Naive thymus-derived CD4-positive, alpha-beta T cell (primary cell): ENCODE measurements at regions of chr3 and their contacts with region 1.

Region 1: DNA sequence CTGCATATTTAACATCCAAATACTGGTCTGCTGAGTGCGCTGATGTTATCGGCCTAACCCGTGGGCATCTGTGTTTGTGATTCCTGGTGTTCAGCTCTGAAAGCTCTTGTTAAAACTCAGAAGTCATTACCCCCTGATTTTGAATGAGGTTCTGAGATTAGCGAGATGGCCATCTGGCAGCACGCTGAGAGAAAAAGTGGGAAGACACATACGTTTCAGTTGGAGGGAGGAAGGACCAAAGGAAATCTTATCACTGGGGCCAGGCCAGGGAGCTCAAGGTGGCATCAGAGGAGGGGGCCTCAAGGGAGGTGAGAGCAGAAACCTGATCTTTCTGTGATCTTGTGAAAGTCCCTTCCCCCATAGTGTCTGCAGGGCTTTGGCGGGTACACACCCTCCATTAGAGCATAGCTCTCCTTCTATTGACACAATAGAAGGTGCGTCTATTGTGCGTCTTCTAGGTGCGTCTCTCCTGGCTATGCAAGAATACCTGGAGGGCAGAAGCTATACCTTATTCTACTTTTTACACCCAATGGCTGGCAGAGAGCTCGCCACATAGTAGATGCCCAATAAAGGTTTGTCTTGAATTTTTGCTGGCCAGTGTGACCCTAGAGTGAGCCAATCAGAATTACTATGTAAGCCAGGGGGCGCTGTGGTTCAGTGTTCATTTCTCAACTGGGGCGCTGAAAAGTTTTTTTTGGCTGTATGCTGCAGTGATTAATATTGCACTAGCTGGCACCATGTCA is 182.4 kb downstream of the SHQ1 start:
- DNase-seq: peak; percentile 34 to 80 (median 59)
- ATAC-seq: peak; percentile 73
- H3K4me3 ChIP-seq: no peak overlapping the region
- H3K4me3 Mint-ChIP-seq: no peak overlapping the region
- H3K27ac ChIP-seq: no peak overlapping the region
- H3K27ac Mint-ChIP-seq: peak overlapping the region in 1 of 9 donors; percentile 59
- H3K4me1 ChIP-seq: peaks cover 0 to 4% of the 10 kb centered on the region in 2 donors
- H3K4me1 Mint-ChIP-seq: no peaks in the 10 kb centered on the region
- H3K27me3 ChIP-seq: no peaks in the 10 kb centered on the region
- H3K27me3 Mint-ChIP-seq: no peaks in the 10 kb centered on the region

Region 2: GRCh38 chr3:71926262-71926600 is 739.6 kb before region 1 on chr3:
- CTCF ChIA-PET with region 1: interaction called, 3 read pairs
- POLR2A ChIA-PET with region 1: no interaction called
- intact Hi-C with region 1: loop called in 1 of 2 experiments (anchors 1 kb)
- DNase-seq: peak in 4 of 9 donors; percentile 10 to 35 (median 15)
- ATAC-seq: no peak
- H3K4me3 ChIP-seq: no peak overlapping the region
- H3K4me3 Mint-ChIP-seq: no peak overlapping the region
- H3K27ac ChIP-seq: no peak overlapping the region
- H3K27ac Mint-ChIP-seq: peak overlapping the region in 1 of 9 donors; percentile 18
- H3K4me1 ChIP-seq: no peaks in the 10 kb centered on the region
- H3K4me1 Mint-ChIP-seq: peaks cover 0 to 5% (median 0%) of the 10 kb centered on the region in 7 donors
- H3K27me3 ChIP-seq: no peaks in the 10 kb centered on the region
- H3K27me3 Mint-ChIP-seq: peaks cover 0 to 4% (median 0%) of the 10 kb centered on the region in 5 donors

Region 3: DNA sequence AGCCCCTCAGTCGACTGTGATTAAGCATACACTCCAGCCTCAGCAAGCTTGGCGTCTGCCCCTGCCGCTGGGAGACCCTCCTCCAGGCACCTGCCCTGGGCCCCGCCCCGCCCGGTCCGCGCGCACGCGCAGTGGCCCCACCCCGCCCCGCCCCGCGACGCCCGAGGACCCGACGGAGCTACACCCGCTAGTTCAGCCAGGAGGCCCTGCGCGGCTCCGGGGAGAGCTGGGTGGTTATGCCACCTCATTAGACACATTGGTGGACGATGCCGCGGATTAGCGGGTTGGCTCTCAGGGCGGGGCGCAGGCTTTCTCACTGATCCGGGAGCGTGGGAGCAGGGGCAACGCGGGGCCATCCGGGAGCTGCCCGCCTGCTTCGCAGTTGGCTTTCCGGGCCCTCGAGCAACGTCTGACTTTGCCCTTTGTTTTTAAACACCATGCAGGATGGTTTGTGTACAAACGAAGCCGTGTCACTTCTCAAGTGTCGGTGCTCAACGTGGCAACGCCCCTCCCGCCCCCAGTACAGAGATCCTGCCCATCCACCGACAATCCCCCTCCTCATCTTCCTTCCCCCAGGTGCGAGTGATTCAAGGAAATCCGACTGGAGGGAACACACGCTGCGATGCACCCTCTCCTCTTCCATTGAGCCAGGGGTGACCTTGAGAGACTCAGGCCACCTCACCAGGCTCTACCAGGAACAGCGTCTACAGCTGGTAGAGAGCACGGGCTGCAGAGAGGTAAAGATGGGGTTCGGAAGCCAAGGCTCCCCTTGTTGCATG is 73.1 kb after region 1 on chr3:
- CTCF ChIA-PET with region 1: interaction called, 13 read pairs
- POLR2A ChIA-PET with region 1: interaction called, 19 read pairs
- intact Hi-C with region 1: loop called in 1 of 2 experiments (anchors 5 kb)
- DNase-seq: peak; percentile 68 to 84 (median 76)
- ATAC-seq: peak; percentile 93
- H3K4me3 ChIP-seq: peak overlapping the region; percentile 80
- H3K4me3 Mint-ChIP-seq: peak overlapping the region; percentile 81 to 96 (median 94)
- H3K27ac ChIP-seq: peak overlapping the region; percentile 81
- H3K27ac Mint-ChIP-seq: peak overlapping the region; percentile 89 to 99 (median 97)
- H3K4me1 ChIP-seq: peaks cover 4 to 21% of the 10 kb centered on the region in 2 donors
- H3K4me1 Mint-ChIP-seq: peaks cover 15 to 35% (median 32%) of the 10 kb centered on the region in 7 donors
- H3K27me3 ChIP-seq: no peaks in the 10 kb centered on the region
- H3K27me3 Mint-ChIP-seq: peaks cover 0 to 3% (median 0%) of the 10 kb centered on the region in 5 donors

Region 4: DNA sequence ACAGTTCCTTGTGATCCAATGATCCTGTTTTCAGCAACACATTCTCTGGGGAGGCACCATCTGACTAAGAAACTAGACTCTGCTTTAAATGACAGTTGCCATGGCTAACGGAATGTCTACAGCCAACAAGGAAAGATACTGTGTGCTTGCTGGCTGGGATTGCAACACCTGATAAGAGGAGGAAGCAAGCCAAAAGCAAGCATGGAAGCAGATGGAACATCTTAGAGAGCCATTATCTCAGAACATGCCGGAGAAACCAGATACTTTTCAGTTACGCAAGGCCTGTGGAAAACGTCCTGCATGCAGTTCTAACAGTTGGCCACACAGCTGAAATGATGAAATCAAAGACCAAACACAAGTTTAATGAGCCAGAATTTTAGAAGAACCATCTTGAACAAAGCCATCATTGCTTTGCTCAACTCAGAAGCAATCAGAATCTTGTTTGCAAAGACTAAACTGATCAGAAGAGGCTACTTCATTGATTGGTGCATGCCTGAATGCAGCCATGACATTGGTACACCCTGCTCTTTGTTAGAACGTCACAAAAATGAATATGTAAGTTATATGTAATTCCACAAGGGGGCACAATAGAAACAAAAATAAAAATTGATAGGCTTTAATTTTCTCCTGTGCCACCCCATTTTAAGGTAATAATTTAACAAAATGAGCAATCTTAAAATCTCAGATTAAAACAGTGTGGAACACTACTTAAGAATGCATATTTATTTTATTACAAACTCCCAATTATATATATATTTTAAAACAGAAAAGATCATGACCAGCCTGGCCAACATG is 272.8 kb after region 1 on chr3:
- CTCF ChIA-PET with region 1: interaction called, 3 read pairs
- POLR2A ChIA-PET with region 1: no interaction called
- intact Hi-C with region 1: loop called in 1 of 2 experiments (anchors 2 kb)
- DNase-seq: peak in 7 of 9 donors; percentile 48 to 76 (median 62)
- ATAC-seq: peak; percentile 99
- H3K4me3 ChIP-seq: no peak overlapping the region
- H3K4me3 Mint-ChIP-seq: no peak overlapping the region
- H3K27ac ChIP-seq: no peak overlapping the region
- H3K27ac Mint-ChIP-seq: no peak overlapping the region
- H3K4me1 ChIP-seq: no peaks in the 10 kb centered on the region
- H3K4me1 Mint-ChIP-seq: no peaks in the 10 kb centered on the region
- H3K27me3 ChIP-seq: no peaks in the 10 kb centered on the region
- H3K27me3 Mint-ChIP-seq: peaks cover 0 to 28% (median 0%) of the 10 kb centered on the region in 5 donors

Region 5: DNA sequence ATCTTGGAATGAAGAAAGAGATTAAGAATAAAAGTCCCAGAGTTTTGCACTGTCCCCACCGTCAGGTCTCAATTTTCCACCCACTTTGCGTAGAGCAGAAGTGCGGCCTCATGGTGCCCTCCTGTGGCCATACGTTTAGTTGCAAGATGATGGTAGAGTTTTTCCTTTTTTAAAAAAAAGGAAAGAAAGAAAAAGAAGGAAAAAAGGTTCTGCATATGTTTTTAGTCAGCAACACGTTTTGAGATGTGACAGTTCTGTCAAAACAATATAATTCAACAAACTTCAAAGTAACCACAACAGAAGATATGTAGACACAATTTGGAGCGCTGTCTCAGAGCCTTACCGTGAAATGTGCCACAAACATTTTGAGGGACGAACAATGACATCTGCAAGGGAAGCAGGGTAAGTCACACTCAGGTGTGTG is 420.2 kb after region 1 on chr3:
- CTCF ChIA-PET with region 1: interaction called, 3 read pairs
- POLR2A ChIA-PET with region 1: no interaction called
- intact Hi-C with region 1: loop called (anchors 1 to 2 kb)
- DNase-seq: peak; percentile 16 to 56 (median 43)
- ATAC-seq: peak; percentile 82
- H3K4me3 ChIP-seq: peak overlapping the region; percentile 11
- H3K4me3 Mint-ChIP-seq: peak overlapping the region in 8 of 10 donors; percentile 25 to 70 (median 57)
- H3K27ac ChIP-seq: no peak overlapping the region
- H3K27ac Mint-ChIP-seq: peak overlapping the region in 1 of 9 donors; percentile 42
- H3K4me1 ChIP-seq: peaks cover 0 to 8% of the 10 kb centered on the region in 2 donors
- H3K4me1 Mint-ChIP-seq: peaks cover 0 to 9% (median 7%) of the 10 kb centered on the region in 7 donors
- H3K27me3 ChIP-seq: no peaks in the 10 kb centered on the region
- H3K27me3 Mint-ChIP-seq: peaks cover 0 to 3% (median 0%) of the 10 kb centered on the region in 5 donors